Activated B cell treated with CpG ODN at 0.5 μM for 24 hours (primary cell): ENCODE measurements at regions of chr13 and their contacts with region 1.

Region 1: GRCh38 chr13:42333613-42334328 is 61.8 kb downstream of the AKAP11 start:
- DNase-seq: no peak
- ATAC-seq: peak; percentile 84
- H3K4me3 Mint-ChIP-seq: no peak overlapping the region
- H3K27ac Mint-ChIP-seq: no peak overlapping the region
- H3K4me1 Mint-ChIP-seq: peaks cover 21% of the 10 kb centered on the region
- H3K27me3 Mint-ChIP-seq: no peaks in the 10 kb centered on the region
- CTCF ChIP-seq: no peak

Region 2: DNA sequence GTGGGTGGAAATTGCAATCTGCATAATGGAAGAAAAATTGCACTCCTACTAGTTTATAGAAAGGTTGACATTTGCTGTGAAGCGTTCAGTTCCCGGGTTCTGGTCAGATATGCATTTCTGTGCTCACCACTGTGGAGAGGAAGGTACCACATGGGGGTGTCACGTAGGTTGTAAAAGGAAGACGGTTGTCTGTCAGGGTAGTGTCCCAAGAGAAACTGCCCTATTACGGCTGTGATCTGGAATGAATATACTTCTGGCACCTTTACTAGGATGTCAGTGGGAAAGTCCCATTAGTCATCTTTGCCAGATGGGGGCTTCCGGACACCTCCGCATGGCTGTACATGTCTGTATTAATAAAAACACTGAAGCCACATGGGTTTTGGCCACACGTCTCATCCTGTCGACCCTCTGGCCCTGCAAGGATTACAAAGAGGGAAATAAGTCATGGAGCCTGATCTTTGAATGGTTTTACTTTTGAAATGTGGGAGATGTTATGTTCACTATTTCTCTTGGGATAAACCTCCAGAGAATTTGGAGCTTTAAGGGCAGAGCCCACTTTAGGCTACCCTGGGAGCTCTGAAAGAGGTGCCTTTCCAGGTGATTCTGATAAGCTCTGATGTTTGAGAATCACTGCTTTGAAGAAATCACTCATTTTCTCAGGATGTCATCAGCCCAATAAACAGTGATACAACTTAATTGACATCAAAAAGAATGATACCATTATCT is 72.1 kb after region 1 on chr13:
- CTCF ChIA-PET with region 1: no interaction called
- POLR2A ChIA-PET with region 1: no interaction called
- intact Hi-C with region 1: loop called (anchors 2 kb)
- DNase-seq: peak; percentile 30
- ATAC-seq: peak; percentile 81
- H3K4me3 Mint-ChIP-seq: peak overlapping the region; percentile 69
- H3K27ac Mint-ChIP-seq: peak overlapping the region; percentile 86
- H3K4me1 Mint-ChIP-seq: peaks cover 19% of the 10 kb centered on the region
- H3K27me3 Mint-ChIP-seq: no peaks in the 10 kb centered on the region
- CTCF ChIP-seq: no peak

Region 3: GRCh38 chr13:42478531-42479156 is 144.9 kb after region 1 on chr13:
- CTCF ChIA-PET with region 1: interaction called, 27 read pairs
- POLR2A ChIA-PET with region 1: interaction called, 4 read pairs
- intact Hi-C with region 1: loop called (anchors 1 kb)
- DNase-seq: no peak
- ATAC-seq: no peak
- H3K4me3 Mint-ChIP-seq: no peak overlapping the region
- H3K27ac Mint-ChIP-seq: no peak overlapping the region
- H3K4me1 Mint-ChIP-seq: no peaks in the 10 kb centered on the region
- H3K27me3 Mint-ChIP-seq: no peaks in the 10 kb centered on the region
- CTCF ChIP-seq: no peak

Region 4: DNA sequence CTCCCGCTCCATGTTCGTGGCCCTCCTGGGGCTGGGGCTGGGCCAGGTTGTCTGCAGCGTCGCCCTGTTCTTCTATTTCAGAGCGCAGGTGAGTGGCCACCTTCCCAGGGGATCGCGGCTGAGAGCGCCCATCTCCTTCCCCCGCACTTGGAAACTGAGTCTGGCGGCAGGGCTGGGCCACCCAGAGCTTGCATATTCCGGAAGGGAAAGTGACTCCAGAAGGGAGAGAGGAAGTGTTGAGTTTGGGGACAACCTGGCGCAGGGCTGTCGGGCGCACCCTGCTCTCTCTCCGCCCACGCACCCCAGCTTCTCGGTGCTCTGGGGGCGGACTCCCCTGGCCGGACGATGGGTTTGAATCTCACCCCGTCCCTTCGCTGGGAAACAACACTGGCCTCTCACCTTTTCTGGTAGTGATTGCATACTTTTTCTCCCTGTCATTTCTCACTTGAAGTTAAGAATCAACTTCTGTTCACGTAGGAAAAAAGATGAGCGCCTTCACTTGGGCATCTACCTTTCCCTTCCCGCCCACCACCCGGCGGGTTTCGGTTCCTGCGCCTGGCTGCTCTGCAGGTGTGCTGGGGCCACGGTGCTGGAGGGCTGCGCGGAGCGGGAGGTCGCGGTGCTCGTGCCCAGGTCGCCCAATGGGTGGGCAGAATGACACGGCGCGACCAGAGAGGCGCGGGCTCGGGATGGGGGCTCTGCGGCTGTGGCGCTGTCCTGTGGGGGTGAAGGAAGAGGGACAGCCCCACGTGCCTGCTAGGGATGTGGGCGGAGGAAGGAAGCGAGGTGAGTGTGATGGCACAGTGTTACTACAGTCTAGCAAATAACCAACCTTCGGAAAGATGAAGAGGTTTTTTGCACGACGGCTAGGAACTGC is 240.9 kb after region 1 on chr13:
- CTCF ChIA-PET with region 1: no interaction called
- POLR2A ChIA-PET with region 1: no interaction called
- intact Hi-C with region 1: loop called (anchors 5 kb)
- DNase-seq: peak; percentile 23
- ATAC-seq: peak; percentile 69
- H3K4me3 Mint-ChIP-seq: peak overlapping the region; percentile 79
- H3K27ac Mint-ChIP-seq: peak overlapping the region; percentile 52
- H3K4me1 Mint-ChIP-seq: peaks cover 19% of the 10 kb centered on the region
- H3K27me3 Mint-ChIP-seq: peaks cover 8% of the 10 kb centered on the region
- CTCF ChIP-seq: no peak

Region 5: GRCh38 chr13:42594970-42595571 is 261.3 kb after region 1 on chr13:
- CTCF ChIA-PET with region 1: interaction called, 13 read pairs
- POLR2A ChIA-PET with region 1: no interaction called
- intact Hi-C with region 1: loop called (anchors 1 kb)
- DNase-seq: no peak
- ATAC-seq: peak; percentile 64
- H3K4me3 Mint-ChIP-seq: no peak overlapping the region
- H3K27ac Mint-ChIP-seq: no peak overlapping the region
- H3K4me1 Mint-ChIP-seq: no peaks in the 10 kb centered on the region
- H3K27me3 Mint-ChIP-seq: peaks cover 1% of the 10 kb centered on the region
- CTCF ChIP-seq: peak; percentile 84

Region 6: DNA sequence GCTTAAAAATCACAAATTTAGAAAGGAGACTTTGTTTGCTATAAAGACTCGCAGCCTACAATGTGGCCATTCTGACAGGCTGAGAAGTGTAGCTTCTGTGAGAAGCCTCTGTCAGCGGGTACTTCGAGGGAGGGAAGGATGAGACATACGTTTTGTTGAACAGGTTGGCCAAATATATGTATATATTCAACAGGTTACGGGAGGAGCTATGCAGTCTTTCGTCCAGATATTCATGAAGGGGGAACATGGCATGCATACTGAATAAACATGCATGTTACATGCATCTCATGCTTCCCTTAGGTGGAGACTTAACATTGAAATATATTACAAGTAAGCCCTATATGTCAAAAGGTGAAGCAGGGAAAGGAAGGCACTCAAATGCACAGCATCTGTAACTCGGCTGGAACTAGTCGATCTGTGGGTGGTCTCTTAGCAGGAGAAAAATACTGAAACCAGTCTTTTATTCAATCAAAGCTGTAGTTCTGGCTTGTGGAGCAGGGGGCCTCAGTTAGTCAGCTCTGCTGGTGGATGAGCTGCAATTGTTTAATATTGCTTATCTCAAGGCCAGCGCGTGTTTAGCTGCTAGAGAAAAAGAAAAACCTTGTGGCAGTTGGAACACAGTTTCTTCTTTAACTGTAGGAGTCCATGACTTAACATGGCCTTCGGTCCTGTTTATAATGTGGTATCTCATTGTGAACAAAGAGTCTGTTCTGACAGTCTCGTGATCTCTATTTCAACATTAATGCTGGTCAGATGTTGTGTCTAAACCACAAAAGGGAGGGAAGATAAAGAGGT is 541.9 kb after region 1 on chr13:
- CTCF ChIA-PET with region 1: no interaction called
- POLR2A ChIA-PET with region 1: no interaction called
- intact Hi-C with region 1: loop called (anchors 10 kb)
- DNase-seq: no peak
- ATAC-seq: peak; percentile 38
- H3K4me3 Mint-ChIP-seq: peak overlapping the region; percentile 47
- H3K27ac Mint-ChIP-seq: peak overlapping the region; percentile 77
- H3K4me1 Mint-ChIP-seq: peaks cover 22% of the 10 kb centered on the region
- H3K27me3 Mint-ChIP-seq: peaks cover 6% of the 10 kb centered on the region
- CTCF ChIP-seq: no peak